Mammary epithelial cell (primary cell): ENCODE measurements at regions of chr11 and their contacts with region 1.

Region 1: GRCh38 chr11:111454561-111455192 is 57.5 kb downstream of the BTG4 start:
- DNase-seq: peak; percentile 82
- H3K4me3 ChIP-seq: no peak overlapping the region
- H3K27ac ChIP-seq: no peak overlapping the region
- H3K4me1 ChIP-seq: peaks cover 6% of the 10 kb centered on the region
- H3K27me3 ChIP-seq: no peaks in the 10 kb centered on the region
- CTCF ChIP-seq: peak; percentile 28 to 56

Region 2: GRCh38 chr11:111512296-111513239 is 57.9 kb after region 1 on chr11 and contains the start of gene BTG4:
- CTCF ChIA-PET with region 1: no interaction called
- dilution Hi-C with region 1: no loop called
- in situ Hi-C with region 1: no loop called
- intact Hi-C with region 1: loop called (anchors 1 kb)
- DNase-seq: no peak
- H3K4me3 ChIP-seq: peak within 1 kb of the TSS; percentile 43 to 52 (median 43)
- H3K27ac ChIP-seq: peak within 1 kb of the TSS; percentile 99
- H3K4me1 ChIP-seq: peaks cover 36% of the 10 kb centered on the region
- H3K27me3 ChIP-seq: no peaks in the 10 kb centered on the region
- CTCF ChIP-seq: no peak
- total RNA-seq, gene BTG4: not detected

Region 3: DNA sequence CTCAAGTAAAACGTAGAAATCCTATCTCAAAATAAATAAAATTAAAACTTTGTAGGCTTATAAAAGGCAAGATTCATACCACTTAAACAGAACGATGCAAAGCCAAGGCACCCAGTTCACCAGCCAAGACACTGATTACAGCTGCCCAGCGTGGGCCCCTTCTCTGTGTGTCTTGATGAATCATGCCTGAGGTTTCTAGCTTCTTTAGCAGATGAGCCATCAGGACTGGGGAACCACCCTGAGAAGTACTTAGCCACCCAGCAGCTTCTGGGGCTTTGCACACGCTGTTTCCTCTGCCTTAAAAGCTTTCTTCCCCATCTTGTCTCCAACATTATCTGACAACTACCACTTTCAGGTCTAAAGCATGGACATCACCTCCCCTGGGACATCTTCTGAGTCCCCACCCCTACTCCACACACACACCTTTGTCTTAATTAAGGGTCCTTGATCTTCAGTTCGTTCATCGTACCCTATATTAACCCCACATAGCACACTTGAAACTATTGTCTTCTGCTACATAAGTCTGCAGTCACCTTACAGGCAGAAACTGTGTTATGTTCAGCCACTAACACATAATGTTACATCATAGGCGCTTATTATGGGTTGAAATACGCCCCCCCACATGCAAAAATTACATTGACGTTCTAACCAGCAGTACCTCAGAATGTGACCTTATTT is 77.1 kb after region 1 on chr11:
- CTCF ChIA-PET with region 1: interaction called, 5 read pairs
- dilution Hi-C with region 1: no loop called
- in situ Hi-C with region 1: no loop called
- intact Hi-C with region 1: loop called (anchors 1 kb)
- DNase-seq: peak; percentile 96
- H3K4me3 ChIP-seq: no peak overlapping the region
- H3K27ac ChIP-seq: peak overlapping the region; percentile 88
- H3K4me1 ChIP-seq: peaks cover 33% of the 10 kb centered on the region
- H3K27me3 ChIP-seq: no peaks in the 10 kb centered on the region
- CTCF ChIP-seq: no peak

Region 4: GRCh38 chr11:111555255-111555654 is 100.6 kb after region 1 on chr11:
- CTCF ChIA-PET with region 1: interaction called, 4 read pairs
- dilution Hi-C with region 1: no loop called
- in situ Hi-C with region 1: loop called in 1 of 2 experiments (anchors 10 kb)
- intact Hi-C with region 1: loop called (anchors 1 kb)
- DNase-seq: peak; percentile 95
- H3K4me3 ChIP-seq: no peak overlapping the region
- H3K27ac ChIP-seq: peak overlapping the region; percentile 95
- H3K4me1 ChIP-seq: peaks cover 25% of the 10 kb centered on the region
- H3K27me3 ChIP-seq: no peaks in the 10 kb centered on the region
- CTCF ChIP-seq: peak in 1 of 2 donors; percentile 28

Region 5: GRCh38 chr11:111565114-111565720 is 110.5 kb after region 1 on chr11:
- CTCF ChIA-PET with region 1: no interaction called
- dilution Hi-C with region 1: no loop called
- in situ Hi-C with region 1: loop called in 1 of 2 experiments (anchors 10 kb)
- intact Hi-C with region 1: loop called (anchors 1 kb)
- DNase-seq: peak; percentile 53
- H3K4me3 ChIP-seq: no peak overlapping the region
- H3K27ac ChIP-seq: no peak overlapping the region
- H3K4me1 ChIP-seq: peaks cover 17% of the 10 kb centered on the region
- H3K27me3 ChIP-seq: no peaks in the 10 kb centered on the region
- CTCF ChIP-seq: peak; percentile 86

Region 6: GRCh38 chr11:111601979-111602864 is 147.5 kb after region 1 on chr11 and contains the start of gene SIK2:
- CTCF ChIA-PET with region 1: no interaction called
- dilution Hi-C with region 1: no loop called
- in situ Hi-C with region 1: no loop called
- intact Hi-C with region 1: loop called (anchors 1 kb)
- DNase-seq: peak; percentile 94
- H3K4me3 ChIP-seq: peak within 1 kb of the TSS; percentile 91 to 98 (median 98)
- H3K27ac ChIP-seq: peak within 1 kb of the TSS; percentile 94
- H3K4me1 ChIP-seq: peaks cover 21% of the 10 kb centered on the region
- H3K27me3 ChIP-seq: no peaks in the 10 kb centered on the region
- CTCF ChIP-seq: peak; percentile 79 to 97
- total RNA-seq, gene SIK2: 15.9 to 17.0 TPM

Region 7: GRCh38 chr11:111841370-111842053 is 386.8 kb after region 1 on chr11:
- CTCF ChIA-PET with region 1: no interaction called
- dilution Hi-C with region 1: no loop called
- in situ Hi-C with region 1: loop called (anchors 10 kb)
- intact Hi-C with region 1: loop called (anchors 1 kb)
- DNase-seq: peak; percentile 60
- H3K4me3 ChIP-seq: no peak overlapping the region
- H3K27ac ChIP-seq: no peak overlapping the region
- H3K4me1 ChIP-seq: no peaks in the 10 kb centered on the region
- H3K27me3 ChIP-seq: no peaks in the 10 kb centered on the region
- CTCF ChIP-seq: peak; percentile 87 to 88